ENCODE measurements at regions of chr6 and their contacts with region 1.

Region 1: DNA sequence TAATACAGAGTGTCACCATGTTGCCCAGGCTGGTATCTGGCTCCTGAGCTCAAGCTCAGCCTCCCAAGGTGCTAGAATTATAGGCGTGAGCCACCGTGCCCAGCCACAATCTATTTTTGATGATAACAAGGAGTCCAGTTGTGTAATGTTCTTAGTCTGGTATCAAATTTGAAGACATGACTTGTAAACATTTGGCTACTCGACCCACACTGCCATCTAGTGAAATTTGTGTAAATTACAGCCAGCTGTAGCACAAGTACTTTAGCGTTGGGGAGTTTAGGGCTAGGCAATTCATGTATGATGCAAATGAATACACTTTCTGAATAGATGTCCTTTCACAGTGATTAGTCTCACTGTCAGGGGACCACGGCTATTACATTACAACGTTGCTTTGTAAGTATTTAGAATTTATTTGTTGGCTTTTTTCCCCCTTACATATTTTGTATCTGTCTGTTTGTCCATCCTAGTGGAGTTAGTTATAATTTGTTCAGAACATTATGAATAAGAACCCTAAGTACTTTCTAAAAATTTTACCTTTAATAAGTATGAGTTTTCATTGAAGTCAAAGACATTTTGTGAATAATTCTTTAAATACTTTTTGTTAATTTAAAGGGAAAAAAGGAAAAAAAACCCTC is 139.7 kb downstream of the PRDM13 start:
- DNase-seq: peak; percentile 19 to 77 (median 49)
- ATAC-seq: peak; percentile 82
- H3K4me3 ChIP-seq: no peak overlapping the region
- H3K4me3 Mint-ChIP-seq: no peak overlapping the region
- H3K27ac ChIP-seq: no peak overlapping the region
- H3K27ac Mint-ChIP-seq: no peak overlapping the region
- H3K4me1 ChIP-seq: no peaks in the 10 kb centered on the region
- H3K4me1 Mint-ChIP-seq: no peaks in the 10 kb centered on the region
- H3K27me3 ChIP-seq: peaks cover 0 to 4% of the 10 kb centered on the region in 2 experiments
- H3K27me3 Mint-ChIP-seq: peaks cover 27% of the 10 kb centered on the region
- CTCF ChIP-seq: peak; percentile 85

Region 2: GRCh38 chr6:99324996-99325395 is 421.4 kb before region 1 on chr6:
- CTCF ChIA-PET with region 1: interaction called, 7 read pairs
- POLR2A ChIA-PET with region 1: no interaction called
- intact Hi-C with region 1: loop called (anchors 5 kb)
- DNase-seq: no peak
- ATAC-seq: no peak
- H3K4me3 ChIP-seq: no peak overlapping the region
- H3K4me3 Mint-ChIP-seq: no peak overlapping the region
- H3K27ac ChIP-seq: no peak overlapping the region
- H3K27ac Mint-ChIP-seq: no peak overlapping the region
- H3K4me1 ChIP-seq: no peaks in the 10 kb centered on the region
- H3K4me1 Mint-ChIP-seq: no peaks in the 10 kb centered on the region
- H3K27me3 ChIP-seq: no peaks in the 10 kb centered on the region
- H3K27me3 Mint-ChIP-seq: peaks cover 21% of the 10 kb centered on the region
- CTCF ChIP-seq: no peak

Region 3: GRCh38 chr6:99736302-99736701 is 10.1 kb before region 1 on chr6:
- CTCF ChIA-PET with region 1: interaction called, 12 read pairs
- POLR2A ChIA-PET with region 1: no interaction called
- intact Hi-C with region 1: no loop called
- DNase-seq: no peak
- ATAC-seq: no peak
- H3K4me3 ChIP-seq: no peak overlapping the region
- H3K4me3 Mint-ChIP-seq: no peak overlapping the region
- H3K27ac ChIP-seq: no peak overlapping the region
- H3K27ac Mint-ChIP-seq: no peak overlapping the region
- H3K4me1 ChIP-seq: no peaks in the 10 kb centered on the region
- H3K4me1 Mint-ChIP-seq: no peaks in the 10 kb centered on the region
- H3K27me3 ChIP-seq: peaks cover 0 to 4% of the 10 kb centered on the region in 2 experiments
- H3K27me3 Mint-ChIP-seq: peaks cover 41% of the 10 kb centered on the region
- CTCF ChIP-seq: no peak

Region 4: GRCh38 chr6:99761711-99762110 is 15.3 kb after region 1 on chr6:
- CTCF ChIA-PET with region 1: interaction called, 11 read pairs
- POLR2A ChIA-PET with region 1: no interaction called
- intact Hi-C with region 1: no loop called
- DNase-seq: no peak
- ATAC-seq: no peak
- H3K4me3 ChIP-seq: no peak overlapping the region
- H3K4me3 Mint-ChIP-seq: no peak overlapping the region
- H3K27ac ChIP-seq: no peak overlapping the region
- H3K27ac Mint-ChIP-seq: no peak overlapping the region
- H3K4me1 ChIP-seq: no peaks in the 10 kb centered on the region
- H3K4me1 Mint-ChIP-seq: no peaks in the 10 kb centered on the region
- H3K27me3 ChIP-seq: no peaks in the 10 kb centered on the region
- H3K27me3 Mint-ChIP-seq: peaks cover 5% of the 10 kb centered on the region
- CTCF ChIP-seq: no peak

Region 5: GRCh38 chr6:100347901-100348550 is 601.6 kb after region 1 on chr6:
- CTCF ChIA-PET with region 1: no interaction called
- POLR2A ChIA-PET with region 1: no interaction called
- intact Hi-C with region 1: no loop called
- DNase-seq: peak in 2 of 9 experiments; percentile 1 to 23
- ATAC-seq: no peak
- H3K4me3 ChIP-seq: no peak overlapping the region
- H3K4me3 Mint-ChIP-seq: no peak overlapping the region
- H3K27ac ChIP-seq: no peak overlapping the region
- H3K27ac Mint-ChIP-seq: no peak overlapping the region
- H3K4me1 ChIP-seq: no peaks in the 10 kb centered on the region
- H3K4me1 Mint-ChIP-seq: peaks cover 1% of the 10 kb centered on the region
- H3K27me3 ChIP-seq: no peaks in the 10 kb centered on the region
- H3K27me3 Mint-ChIP-seq: no peaks in the 10 kb centered on the region
- CTCF ChIP-seq: no peak

Measured in CD8-positive, alpha-beta T cell (primary cell).